GM12878 (cell line): ENCODE measurements at regions of chr7 and their contacts with region 1.

Region 1: GRCh38 chr7:30062591-30062990 is 34.4 kb downstream of the PLEKHA8 start:
- DNase-seq: no peak
- ATAC-seq: peak; percentile 91
- H3K4me3 ChIP-seq: no peak overlapping the region
- H3K27ac ChIP-seq: no peak overlapping the region
- H3K4me1 ChIP-seq: no peaks in the 10 kb centered on the region
- H3K27me3 ChIP-seq: no peaks in the 10 kb centered on the region
- CTCF ChIP-seq: peak; percentile 57 to 69 (median 62); a peak in 5 of 6 replicates
- EP300 ChIP-seq: no peak
- POLR2A ChIP-seq: no peak
- RAD21 ChIP-seq: peak; percentile 80

Region 2: GRCh38 chr7:29639881-29640595 is 422.6 kb before region 1 on chr7:
- CTCF ChIA-PET with region 1: interaction called, 8 read pairs
- POLR2A ChIA-PET with region 1: no interaction called
- RAD21 ChIA-PET with region 1: no interaction called
- SMC1A ChIA-PET with region 1: interaction called, 5 read pairs
- in situ Hi-C with region 1: loop called (anchors 25 kb)
- intact Hi-C with region 1: no loop called
- DNase-seq: no peak
- ATAC-seq: no peak
- H3K4me3 ChIP-seq: no peak overlapping the region
- H3K27ac ChIP-seq: no peak overlapping the region
- H3K4me1 ChIP-seq: no peaks in the 10 kb centered on the region
- H3K27me3 ChIP-seq: no peaks in the 10 kb centered on the region; a peak in 1 of 4 replicates
- CTCF ChIP-seq: no peak
- EP300 ChIP-seq: no peak
- POLR2A ChIP-seq: no peak
- RAD21 ChIP-seq: no peak

Region 3: GRCh38 chr7:29884399-29885272 is 178.0 kb before region 1 on chr7:
- CTCF ChIA-PET with region 1: interaction called, 62 read pairs
- POLR2A ChIA-PET with region 1: no interaction called
- RAD21 ChIA-PET with region 1: interaction called, 31 read pairs
- SMC1A ChIA-PET with region 1: interaction called, 28 read pairs
- in situ Hi-C with region 1: loop called (anchors 5 kb)
- intact Hi-C with region 1: no loop called
- DNase-seq: no peak
- ATAC-seq: no peak
- H3K4me3 ChIP-seq: no peak overlapping the region
- H3K27ac ChIP-seq: no peak overlapping the region
- H3K4me1 ChIP-seq: no peaks in the 10 kb centered on the region
- H3K27me3 ChIP-seq: no peaks in the 10 kb centered on the region; a peak in 1 of 4 replicates
- CTCF ChIP-seq: no peak
- EP300 ChIP-seq: no peak
- POLR2A ChIP-seq: no peak
- RAD21 ChIP-seq: no peak

Region 4: GRCh38 chr7:29935111-29935510 is 127.5 kb before region 1 on chr7:
- CTCF ChIA-PET with region 1: interaction called, 10 read pairs
- POLR2A ChIA-PET with region 1: no interaction called
- RAD21 ChIA-PET with region 1: interaction called, 3 read pairs
- SMC1A ChIA-PET with region 1: interaction called, 3 read pairs
- in situ Hi-C with region 1: no loop called
- intact Hi-C with region 1: no loop called
- DNase-seq: no peak
- ATAC-seq: no peak
- H3K4me3 ChIP-seq: no peak overlapping the region
- H3K27ac ChIP-seq: no peak overlapping the region
- H3K4me1 ChIP-seq: no peaks in the 10 kb centered on the region
- H3K27me3 ChIP-seq: no peaks in the 10 kb centered on the region
- CTCF ChIP-seq: no peak
- EP300 ChIP-seq: no peak
- POLR2A ChIP-seq: no peak
- RAD21 ChIP-seq: no peak

Region 5: GRCh38 chr7:29988424-29989256 is 74.0 kb before region 1 on chr7:
- CTCF ChIA-PET with region 1: interaction called, 14 read pairs
- POLR2A ChIA-PET with region 1: interaction called, 3 read pairs
- RAD21 ChIA-PET with region 1: interaction called, 9 read pairs
- SMC1A ChIA-PET with region 1: interaction called, 11 read pairs
- in situ Hi-C with region 1: no loop called
- intact Hi-C with region 1: no loop called
- DNase-seq: peak; percentile 63
- ATAC-seq: peak; percentile 66
- H3K4me3 ChIP-seq: peak overlapping the region; percentile 85
- H3K27ac ChIP-seq: peak overlapping the region; percentile 89
- H3K4me1 ChIP-seq: peaks cover 9% of the 10 kb centered on the region; the same call in 1 of the 2 replicates
- H3K27me3 ChIP-seq: no peaks in the 10 kb centered on the region
- CTCF ChIP-seq: no peak
- EP300 ChIP-seq: no peak
- POLR2A ChIP-seq: peak; percentile 63
- RAD21 ChIP-seq: no peak

Region 6: DNA sequence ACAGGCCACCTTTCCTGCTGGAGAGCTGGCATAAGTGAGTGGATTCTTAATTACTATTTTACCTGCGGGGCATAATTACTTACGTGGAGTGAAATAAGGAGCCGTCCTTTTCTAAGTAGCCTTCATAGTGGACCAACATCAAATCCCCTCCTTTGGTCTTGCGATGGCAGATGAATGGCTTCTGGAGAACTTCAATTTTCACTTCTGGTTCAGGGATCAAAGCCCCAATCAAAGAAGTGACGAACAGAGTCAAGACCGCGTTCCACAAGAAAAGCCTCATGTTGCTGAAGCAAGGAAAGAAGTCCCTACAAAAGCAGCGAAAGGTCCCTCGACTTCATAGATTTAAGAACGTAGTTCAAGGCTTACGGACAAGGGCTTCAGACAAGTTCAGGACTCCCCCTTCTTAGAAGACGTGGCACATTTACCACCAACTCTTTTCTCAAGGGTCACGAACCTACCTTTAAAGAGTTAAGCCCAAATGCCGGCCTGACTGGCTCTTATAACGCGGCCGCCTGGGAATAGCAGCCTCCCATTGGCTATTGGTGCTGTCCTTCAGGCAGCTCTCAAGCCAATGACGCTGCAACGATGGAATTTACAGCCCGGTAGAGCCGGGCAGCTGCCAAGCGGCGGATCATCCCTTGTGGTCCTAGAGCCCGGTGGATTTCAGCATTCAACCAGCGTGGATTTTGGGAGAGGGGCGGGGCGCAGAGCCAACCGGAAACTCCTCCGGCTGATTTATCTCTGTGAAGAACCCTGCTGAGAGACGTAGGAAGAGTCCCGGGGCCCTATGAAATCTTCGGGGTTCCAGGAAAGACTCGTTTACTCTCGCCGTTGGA is 36.1 kb before region 1 on chr7 and contains the start of gene FKBP14:
- CTCF ChIA-PET with region 1: interaction called, 20 read pairs
- POLR2A ChIA-PET with region 1: interaction called, 4 read pairs
- RAD21 ChIA-PET with region 1: interaction called, 8 read pairs
- SMC1A ChIA-PET with region 1: interaction called, 19 read pairs
- in situ Hi-C with region 1: no loop called
- intact Hi-C with region 1: loop called (anchors 2 kb)
- DNase-seq: peak; percentile 94
- ATAC-seq: peak; percentile 85
- H3K4me3 ChIP-seq: peak within 1 kb of the TSS; percentile 76
- H3K27ac ChIP-seq: peak within 1 kb of the TSS; percentile 77
- H3K4me1 ChIP-seq: no peaks in the 10 kb centered on the region; the same call in 1 of the 2 replicates
- H3K27me3 ChIP-seq: no peaks in the 10 kb centered on the region
- CTCF ChIP-seq: no peak
- EP300 ChIP-seq: 0 out of 4 replicates have a peak, but pooled peaks of 1 of the 2 experiments have one; percentile 35
- POLR2A ChIP-seq: peak; percentile 81
- RAD21 ChIP-seq: no peak
- polyA plus RNA-seq, gene FKBP14: 2.7 to 3.7 TPM

Region 7: DNA sequence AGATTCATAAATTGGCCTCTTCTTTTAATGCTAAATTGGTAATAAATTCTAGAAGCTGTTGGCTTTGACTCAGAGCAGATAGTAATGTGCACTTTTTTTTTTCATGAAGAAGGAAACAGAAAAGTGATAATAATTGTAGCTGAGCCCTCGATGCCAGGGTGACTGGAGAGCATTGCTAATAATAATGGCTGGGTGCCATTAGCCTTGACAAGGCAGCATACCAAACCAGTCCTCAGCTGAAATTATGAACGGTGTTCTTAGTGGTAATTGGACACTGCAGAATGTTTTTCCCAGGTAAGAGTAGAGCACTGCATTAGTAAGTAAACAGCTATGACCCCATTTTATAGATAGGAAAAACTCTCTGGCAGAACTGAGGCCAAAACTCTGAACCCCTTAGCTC is 15.5 kb before region 1 on chr7:
- CTCF ChIA-PET with region 1: interaction called, 16 read pairs
- POLR2A ChIA-PET with region 1: interaction called, 3 read pairs
- RAD21 ChIA-PET with region 1: interaction called, 4 read pairs
- SMC1A ChIA-PET with region 1: interaction called, 4 read pairs
- in situ Hi-C with region 1: no loop called
- intact Hi-C with region 1: no loop called
- DNase-seq: no peak
- ATAC-seq: no peak
- H3K4me3 ChIP-seq: no peak overlapping the region
- H3K27ac ChIP-seq: no peak overlapping the region
- H3K4me1 ChIP-seq: no peaks in the 10 kb centered on the region
- H3K27me3 ChIP-seq: no peaks in the 10 kb centered on the region
- CTCF ChIP-seq: no peak
- EP300 ChIP-seq: no peak
- POLR2A ChIP-seq: no peak
- RAD21 ChIP-seq: no peak